ENCODE measurements at regions of chr9 and their contacts with region 1.

Region 1: GRCh38 chr9:33290247-33291030 is at the start of gene NFX1:
- DNase-seq: peak; percentile 92 to 96 (median 95)
- H3K4me3 ChIP-seq: peak within 1 kb of the TSS; percentile 70 to 100 (median 95)
- H3K27ac ChIP-seq: peak within 1 kb of the TSS; percentile 73 to 100 (median 98)
- H3K27me3 ChIP-seq: no peaks in the 10 kb centered on the region
- CTCF ChIP-seq: peak in 27 of 56 donors; percentile 4 to 56 (median 20)
- total RNA-seq, gene NFX1: 33.6 to 54.0 (median 43.9) TPM

Region 2: GRCh38 chr9:32483343-32483742 is 807.1 kb before region 1 on chr9:
- intact Hi-C with region 1: no loop called
- DNase-seq: no peak
- H3K4me3 ChIP-seq: no peak overlapping the region
- H3K27ac ChIP-seq: no peak overlapping the region
- H3K27me3 ChIP-seq: no peaks in the 10 kb centered on the region
- CTCF ChIP-seq: no peak

Region 3: GRCh38 chr9:33223696-33224095 is 66.7 kb before region 1 on chr9:
- intact Hi-C with region 1: no loop called
- DNase-seq: no peak
- H3K4me3 ChIP-seq: no peak overlapping the region
- H3K27ac ChIP-seq: no peak overlapping the region
- H3K27me3 ChIP-seq: peaks cover 0 to 4% (median 0%) of the 10 kb centered on the region in 45 donors
- CTCF ChIP-seq: no peak

Region 4: DNA sequence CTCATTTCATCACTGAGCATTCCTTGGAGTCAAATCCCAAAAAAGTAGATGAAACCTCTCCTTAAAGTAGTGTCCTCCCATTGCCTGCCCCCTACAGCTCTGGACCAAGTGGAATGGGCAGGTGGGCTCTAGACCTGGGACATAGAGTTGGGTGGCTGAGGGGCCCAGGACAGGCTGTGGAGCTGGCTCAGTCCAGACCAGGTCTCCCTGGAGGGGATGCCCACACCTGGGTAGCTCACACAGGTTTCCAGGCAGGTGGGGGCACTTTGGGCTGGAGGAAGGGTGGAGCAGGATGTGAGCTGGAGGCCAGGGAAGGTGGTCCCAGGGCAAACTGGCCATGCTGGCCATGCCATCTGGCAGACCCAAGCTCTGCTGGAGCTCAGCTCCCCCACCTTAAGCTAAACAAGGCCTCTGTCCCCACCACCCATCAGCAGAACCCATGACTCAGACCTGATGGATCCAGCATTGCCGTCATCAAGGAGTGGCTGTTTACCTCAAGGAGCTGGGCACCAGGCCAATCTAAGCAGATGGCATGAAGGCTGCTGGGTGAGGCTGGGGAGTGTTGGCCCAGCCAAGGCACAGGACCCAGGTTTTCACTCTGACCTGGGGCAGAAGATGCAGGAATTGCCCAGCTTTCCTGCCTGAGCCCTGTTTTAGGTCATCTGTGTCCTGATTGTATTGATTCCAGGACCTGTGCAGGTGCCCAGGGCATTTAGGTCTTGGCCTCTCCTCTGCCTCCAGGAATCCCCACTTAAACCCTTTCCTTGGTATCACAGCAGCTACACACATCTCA is 56.6 kb before region 1 on chr9:
- intact Hi-C with region 1: no loop called
- DNase-seq: peak in 2 of 10 donors; percentile 53 to 68
- H3K4me3 ChIP-seq: no peak overlapping the region
- H3K27ac ChIP-seq: no peak overlapping the region
- H3K27me3 ChIP-seq: peaks cover 0 to 8% (median 0%) of the 10 kb centered on the region in 45 donors
- CTCF ChIP-seq: no peak

Region 5: GRCh38 chr9:33264473-33265177 is 25.8 kb before region 1 on chr9 and contains the starts of genes BAG1 and CHMP5:
- intact Hi-C with region 1: loop called (anchors 1 to 2 kb)
- DNase-seq: peak; percentile 99 to 100 (median 100)
- H3K4me3 ChIP-seq: peak within 1 kb of the TSS; percentile 50 to 100 (median 94)
- H3K27ac ChIP-seq: peak within 1 kb of the TSS; percentile 49 to 95 (median 88)
- H3K27me3 ChIP-seq: no peaks in the 10 kb centered on the region
- CTCF ChIP-seq: peak in 52 of 56 donors; percentile 19 to 73 (median 50)
- total RNA-seq, gene BAG1: 49.1 to 127 (median 80.7) TPM
- total RNA-seq, gene CHMP5: 41.0 to 98.2 (median 72.4) TPM

Region 6: GRCh38 chr9:33466565-33467495 is 176.4 kb after region 1 on chr9:
- intact Hi-C with region 1: loop called (anchors 5 to 10 kb)
- DNase-seq: peak; percentile 29 to 73 (median 56)
- H3K4me3 ChIP-seq: no peak overlapping the region
- H3K27ac ChIP-seq: peak overlapping the region in 5 of 59 donors; percentile 18 to 52 (median 35)
- H3K27me3 ChIP-seq: no peaks in the 10 kb centered on the region
- CTCF ChIP-seq: peak; percentile 54 to 95 (median 86)

Region 7: DNA sequence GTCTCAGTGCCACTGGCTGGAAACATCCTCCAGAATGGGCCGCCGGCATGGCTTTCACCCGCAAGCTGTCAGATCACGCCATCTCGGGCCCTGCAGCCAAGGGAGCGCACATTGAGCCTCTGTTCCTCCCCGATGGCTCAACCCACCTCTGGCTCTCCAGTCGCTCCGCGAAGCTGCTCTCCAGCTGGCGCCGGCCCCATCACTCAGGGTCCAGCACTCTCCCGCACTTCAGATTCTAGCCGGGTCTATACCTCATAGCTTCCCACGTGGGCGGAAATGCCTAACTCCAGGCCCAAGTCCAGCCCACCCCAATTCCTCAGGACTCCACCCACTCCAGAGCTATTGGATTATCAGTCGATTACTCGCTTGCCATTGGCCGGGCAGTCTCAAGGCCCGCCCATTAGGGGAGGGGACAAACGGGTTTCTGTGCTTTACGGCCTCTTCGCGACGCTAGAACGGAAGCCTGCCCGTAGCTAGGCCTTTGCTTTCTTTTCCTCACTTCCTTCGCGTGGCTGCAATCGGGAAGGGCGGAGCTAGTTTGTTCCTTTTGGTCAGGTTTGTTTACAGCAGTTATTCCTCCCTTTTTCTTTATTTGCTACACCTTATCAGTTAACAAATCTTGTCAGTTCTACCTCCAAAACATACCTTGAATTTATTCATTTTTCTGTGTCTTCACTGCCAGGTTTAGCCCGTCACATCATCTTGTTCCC is 183.4 kb after region 1 on chr9 and contains the start of gene NOL6:
- intact Hi-C with region 1: loop called (anchors 5 to 10 kb)
- DNase-seq: peak; percentile 93 to 99 (median 98)
- H3K4me3 ChIP-seq: peak within 1 kb of the TSS; percentile 66 to 100 (median 91)
- H3K27ac ChIP-seq: peak within 1 kb of the TSS in 51 of 59 donors; percentile 6 to 88 (median 74)
- H3K27me3 ChIP-seq: no peaks in the 10 kb centered on the region
- CTCF ChIP-seq: peak in 33 of 56 donors; percentile 8 to 55 (median 32)
- total RNA-seq, gene NOL6: 18.9 to 46.6 (median 33.1) TPM

Measured in dorsolateral prefrontal cortex (tissue), 120 donors.